IMR-90 (cell line): ENCODE measurements at regions of chr3 and their contacts with region 1.

Region 1: DNA sequence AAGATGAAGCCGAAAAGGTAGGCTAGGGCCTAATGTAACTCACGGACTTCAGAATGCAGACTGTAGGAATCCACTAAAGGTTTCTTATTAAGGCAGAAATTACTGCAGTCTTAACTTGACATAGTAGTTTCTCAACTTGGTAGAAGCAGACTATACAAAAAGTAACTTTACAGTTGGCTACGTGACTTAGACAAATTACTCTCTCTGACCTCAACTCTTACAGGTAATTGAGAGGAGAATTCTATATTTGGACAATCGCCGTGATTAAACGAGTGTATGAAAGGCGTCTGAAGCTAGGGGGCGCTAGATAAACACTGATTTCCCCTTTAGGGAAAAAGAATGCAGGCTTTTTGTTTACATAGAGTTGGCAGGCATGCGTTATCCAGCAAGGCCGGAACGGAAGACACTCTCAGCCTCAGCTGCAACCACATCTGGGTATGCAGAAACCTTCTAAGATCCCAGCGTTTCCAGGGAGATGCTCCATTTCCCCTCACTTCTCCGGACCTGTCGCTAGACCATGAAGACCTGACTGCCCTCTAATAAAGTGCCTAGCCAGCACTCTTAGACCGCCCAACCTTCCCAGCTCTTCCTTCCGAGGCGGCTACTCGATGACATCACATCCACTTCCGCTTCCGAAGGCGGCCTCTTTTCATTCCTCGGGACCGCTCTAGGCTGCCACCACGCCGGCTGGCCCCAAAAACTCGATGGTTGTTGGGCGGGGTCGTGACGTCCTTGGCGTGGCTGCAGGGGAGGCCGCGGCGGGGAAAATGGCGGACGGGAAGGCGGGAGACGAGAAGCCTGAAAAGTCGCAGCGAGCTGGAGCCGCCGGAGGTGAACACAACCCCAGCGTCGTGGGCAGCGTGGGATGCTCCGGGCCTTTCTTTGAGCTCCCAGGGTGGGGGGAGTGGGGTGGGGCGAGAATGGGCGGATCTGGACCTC is at the start of gene PCNP:
- DNase-seq: peak; percentile 99
- ATAC-seq: peak; percentile 93
- H3K4me3 ChIP-seq: peak within 1 kb of the TSS; percentile 75
- H3K27ac ChIP-seq: peak within 1 kb of the TSS; percentile 92
- H3K4me1 ChIP-seq: no peaks in the 10 kb centered on the region
- H3K27me3 ChIP-seq: no peaks in the 10 kb centered on the region
- CTCF ChIP-seq: peak; percentile 90
- POLR2A ChIP-seq: peak; percentile 93
- RAD21 ChIP-seq: peak; percentile 62
- total RNA-seq, gene PCNP: 34.6 and 87.5 TPM in 2 replicates

Region 2: DNA sequence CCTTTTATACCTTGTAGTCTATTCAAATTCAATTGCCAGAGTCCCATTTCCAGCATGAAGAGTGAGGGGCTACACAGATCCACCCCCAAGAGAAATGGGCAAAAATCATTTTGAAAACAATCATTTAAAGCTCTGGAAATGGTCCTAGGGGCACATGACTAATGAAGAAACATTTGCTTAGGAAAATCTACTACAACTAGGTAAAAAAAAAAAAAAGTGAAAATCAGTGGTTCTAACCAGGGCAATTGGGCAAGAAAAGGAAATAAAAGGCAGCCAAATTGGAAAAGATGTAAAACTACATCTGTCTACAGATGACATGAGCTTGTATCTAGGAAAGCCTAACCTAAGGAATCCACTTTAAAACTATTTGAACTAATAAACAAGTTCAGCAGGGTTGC is 262.7 kb before region 1 on chr3:
- CTCF ChIA-PET with region 1: no interaction called
- POLR2A ChIA-PET with region 1: no interaction called
- dilution Hi-C with region 1: no loop called
- in situ Hi-C with region 1: no loop called
- intact Hi-C with region 1: no loop called
- DNase-seq: no peak
- ATAC-seq: no peak
- H3K4me3 ChIP-seq: no peak overlapping the region
- H3K27ac ChIP-seq: no peak overlapping the region; the same call in 1 of the 2 replicates
- H3K4me1 ChIP-seq: 0 out of 2 replicates have a peak, but pooled peaks cover 2% of the 10 kb centered on the region
- H3K27me3 ChIP-seq: no peaks in the 10 kb centered on the region
- CTCF ChIP-seq: no peak
- POLR2A ChIP-seq: no peak
- RAD21 ChIP-seq: no peak

Region 3: GRCh38 chr3:101512646-101513418 is 60.9 kb before region 1 on chr3 and contains the start of gene SENP7:
- CTCF ChIA-PET with region 1: interaction called, 3 read pairs
- POLR2A ChIA-PET with region 1: no interaction called
- dilution Hi-C with region 1: no loop called
- in situ Hi-C with region 1: no loop called
- intact Hi-C with region 1: loop called (anchors 2 kb)
- DNase-seq: peak; percentile 75
- ATAC-seq: peak; percentile 86
- H3K4me3 ChIP-seq: peak within 1 kb of the TSS; percentile 80
- H3K27ac ChIP-seq: peak within 1 kb of the TSS; percentile 98
- H3K4me1 ChIP-seq: 0 out of 2 replicates have a peak, but pooled peaks cover 2% of the 10 kb centered on the region
- H3K27me3 ChIP-seq: no peaks in the 10 kb centered on the region
- CTCF ChIP-seq: no peak
- POLR2A ChIP-seq: no peak
- RAD21 ChIP-seq: no peak
- total RNA-seq, gene SENP7: 8.4 and 14.7 TPM in 2 replicates

Region 4: DNA sequence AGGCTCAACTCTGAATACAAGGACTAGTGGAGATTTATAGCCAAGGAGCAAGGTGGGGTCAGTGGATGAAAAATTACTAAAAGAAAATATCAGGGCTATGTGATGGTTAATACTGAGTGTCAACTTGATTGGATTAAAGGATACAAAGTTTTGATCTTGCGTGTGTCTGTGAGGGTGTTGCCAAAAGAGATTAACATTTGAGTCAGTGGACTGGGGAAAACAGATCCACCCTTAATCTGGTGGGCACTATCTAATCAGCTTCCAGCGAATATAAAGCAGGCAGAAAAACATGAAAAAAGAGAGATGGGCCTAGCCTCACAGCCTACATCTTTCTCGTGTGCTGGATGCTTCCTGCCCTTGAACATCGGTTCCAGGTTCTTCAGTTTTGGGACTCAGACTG is 46.3 kb before region 1 on chr3:
- CTCF ChIA-PET with region 1: no interaction called
- POLR2A ChIA-PET with region 1: no interaction called
- dilution Hi-C with region 1: no loop called
- in situ Hi-C with region 1: no loop called
- intact Hi-C with region 1: no loop called
- DNase-seq: no peak
- ATAC-seq: no peak
- H3K4me3 ChIP-seq: no peak overlapping the region
- H3K27ac ChIP-seq: no peak overlapping the region
- H3K4me1 ChIP-seq: no peaks in the 10 kb centered on the region
- H3K27me3 ChIP-seq: peaks cover 3% of the 10 kb centered on the region
- CTCF ChIP-seq: no peak
- POLR2A ChIP-seq: no peak
- RAD21 ChIP-seq: no peak

Region 5: DNA sequence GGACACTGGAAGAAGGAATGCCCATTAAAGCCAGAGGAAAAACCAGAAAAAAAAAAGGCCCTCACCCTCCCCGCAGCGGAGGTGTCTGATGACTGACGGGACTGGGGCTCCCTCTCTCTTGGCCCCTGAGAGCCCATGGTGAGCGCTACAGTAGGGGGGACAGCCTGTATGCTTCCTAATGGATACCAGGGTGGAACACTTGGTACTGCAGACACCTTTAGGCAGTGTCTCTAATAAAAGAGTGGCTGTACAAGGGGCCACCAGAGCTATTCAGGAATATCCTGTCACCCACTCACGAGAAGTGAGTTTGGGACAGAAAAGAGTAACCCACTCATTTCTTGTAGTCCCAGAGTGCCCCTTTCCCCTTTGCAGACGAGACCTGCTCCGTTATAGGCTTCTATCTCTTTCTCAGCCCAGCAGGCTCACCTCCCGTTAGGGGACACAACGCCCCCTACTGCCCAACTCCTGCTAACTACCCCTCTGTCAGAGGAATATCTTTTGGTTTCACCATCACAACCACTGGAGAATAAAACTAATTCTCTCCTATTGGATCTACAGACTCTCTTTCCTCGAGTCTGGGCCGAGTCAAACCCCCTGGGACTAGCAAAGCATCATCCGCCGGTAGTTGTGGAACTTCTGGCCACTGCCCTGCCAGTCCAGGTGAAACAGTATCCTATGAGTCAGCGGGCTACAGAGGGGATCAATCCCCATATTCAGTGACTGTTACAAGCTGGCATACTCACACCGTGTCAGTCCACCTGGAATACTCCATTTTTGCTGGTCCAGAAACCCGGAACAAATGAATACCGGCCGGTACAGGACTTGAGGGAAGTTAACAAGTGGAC is 62.5 kb after region 1 on chr3:
- CTCF ChIA-PET with region 1: no interaction called
- POLR2A ChIA-PET with region 1: no interaction called
- dilution Hi-C with region 1: no loop called
- in situ Hi-C with region 1: no loop called
- intact Hi-C with region 1: loop called (anchors 5 kb)
- DNase-seq: peak; percentile 20
- ATAC-seq: peak; percentile 97
- H3K4me3 ChIP-seq: no peak overlapping the region
- H3K27ac ChIP-seq: no peak overlapping the region
- H3K4me1 ChIP-seq: no peaks in the 10 kb centered on the region
- H3K27me3 ChIP-seq: peaks cover 5% of the 10 kb centered on the region; the same call in 1 of the 2 replicates
- CTCF ChIP-seq: peak; percentile 62
- POLR2A ChIP-seq: no peak
- RAD21 ChIP-seq: peak; percentile 50

Region 6: GRCh38 chr3:101646726-101647125 is 73.0 kb after region 1 on chr3:
- CTCF ChIA-PET with region 1: no interaction called
- POLR2A ChIA-PET with region 1: no interaction called
- dilution Hi-C with region 1: no loop called
- in situ Hi-C with region 1: no loop called
- intact Hi-C with region 1: loop called (anchors 5 kb)
- DNase-seq: peak; percentile 16
- ATAC-seq: no peak
- H3K4me3 ChIP-seq: no peak overlapping the region
- H3K27ac ChIP-seq: no peak overlapping the region
- H3K4me1 ChIP-seq: 0 out of 2 replicates have a peak, but pooled peaks cover 1% of the 10 kb centered on the region
- H3K27me3 ChIP-seq: no peaks in the 10 kb centered on the region
- CTCF ChIP-seq: no peak
- POLR2A ChIP-seq: no peak
- RAD21 ChIP-seq: no peak

Region 7: GRCh38 chr3:102006812-102007485 is 433.2 kb after region 1 on chr3:
- CTCF ChIA-PET with region 1: no interaction called
- POLR2A ChIA-PET with region 1: no interaction called
- dilution Hi-C with region 1: no loop called
- in situ Hi-C with region 1: no loop called
- intact Hi-C with region 1: no loop called
- DNase-seq: peak; percentile 96
- ATAC-seq: peak; percentile 97
- H3K4me3 ChIP-seq: no peak overlapping the region
- H3K27ac ChIP-seq: no peak overlapping the region
- H3K4me1 ChIP-seq: peaks cover 3% of the 10 kb centered on the region; the same call in 1 of the 2 replicates
- H3K27me3 ChIP-seq: no peaks in the 10 kb centered on the region
- CTCF ChIP-seq: no peak
- POLR2A ChIP-seq: no peak
- RAD21 ChIP-seq: no peak

Region 8: DNA sequence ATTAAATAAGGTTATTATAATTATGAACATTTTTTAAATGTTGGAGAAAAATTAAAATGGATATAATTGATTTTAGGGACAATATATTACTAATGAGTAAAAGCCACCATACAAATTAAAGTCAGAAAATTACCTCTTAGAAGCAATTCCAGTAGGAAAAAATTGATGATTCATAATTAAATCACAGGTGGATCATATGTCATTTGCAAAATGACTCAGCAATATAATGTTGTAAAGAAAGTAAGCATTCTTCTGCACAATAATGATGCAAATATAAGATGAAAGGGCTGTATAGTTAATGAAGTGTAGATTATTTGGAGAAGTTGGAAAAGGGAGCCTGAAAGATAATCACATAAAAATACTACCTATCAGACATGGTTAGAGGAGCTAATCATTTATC is 886.9 kb after region 1 on chr3:
- CTCF ChIA-PET with region 1: no interaction called
- POLR2A ChIA-PET with region 1: no interaction called
- dilution Hi-C with region 1: no loop called
- in situ Hi-C with region 1: no loop called
- intact Hi-C with region 1: no loop called
- DNase-seq: peak; percentile 3
- ATAC-seq: no peak
- H3K4me3 ChIP-seq: no peak overlapping the region
- H3K27ac ChIP-seq: no peak overlapping the region
- H3K4me1 ChIP-seq: no peaks in the 10 kb centered on the region
- H3K27me3 ChIP-seq: no peaks in the 10 kb centered on the region
- CTCF ChIP-seq: no peak
- POLR2A ChIP-seq: no peak
- RAD21 ChIP-seq: no peak